ENCODE measurements at regions of chr3 and their contacts with region 1.

Region 1: DNA sequence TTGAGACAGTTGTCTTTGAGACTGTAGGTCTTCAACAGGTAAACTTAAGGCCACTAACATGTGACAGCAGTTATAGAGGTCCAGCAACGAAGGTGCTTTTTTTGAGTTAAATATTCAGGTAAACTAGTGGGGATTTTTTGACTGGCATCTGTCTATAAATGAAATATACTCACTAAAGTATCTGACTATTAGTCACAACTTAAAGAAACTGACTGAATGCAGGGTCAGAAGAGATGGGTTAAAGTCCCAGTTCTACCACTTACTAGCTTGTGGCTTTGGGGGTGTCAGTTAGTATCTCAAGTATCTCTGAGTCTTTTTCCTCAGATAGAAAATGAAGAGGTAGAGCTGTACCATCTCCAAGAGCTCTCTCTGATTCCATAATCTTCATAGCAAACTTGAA is 18.0 kb downstream of the MIX23 start:
- DNase-seq: no peak
- H3K4me3 Mint-ChIP-seq: peak overlapping the region; percentile 14
- H3K27ac Mint-ChIP-seq: peak overlapping the region; percentile 92
- H3K4me1 Mint-ChIP-seq: peaks cover 41% of the 10 kb centered on the region
- H3K27me3 Mint-ChIP-seq: no peaks in the 10 kb centered on the region

Region 2: DNA sequence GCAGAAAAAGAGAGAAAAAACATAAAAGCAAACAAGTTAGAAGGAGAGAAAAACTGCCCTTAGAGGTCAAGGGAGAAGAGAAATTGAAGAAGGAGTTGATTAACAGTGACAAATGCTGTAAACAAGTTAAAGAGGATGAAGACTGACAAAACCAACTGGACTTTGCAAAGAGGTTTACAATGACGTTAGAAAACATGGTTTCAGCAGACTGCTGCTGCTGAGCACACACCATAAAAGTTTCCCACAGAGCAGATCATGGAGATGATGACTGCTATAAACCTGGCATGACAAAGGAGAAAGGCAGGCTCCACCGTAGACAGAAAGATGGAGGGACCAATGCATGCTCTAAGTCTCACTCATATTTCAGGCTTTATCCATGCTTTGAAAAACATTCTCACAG is 898.0 kb before region 1 on chr3:
- intact Hi-C with region 1: no loop called
- DNase-seq: no peak
- H3K4me3 Mint-ChIP-seq: no peak overlapping the region
- H3K27ac Mint-ChIP-seq: no peak overlapping the region
- H3K4me1 Mint-ChIP-seq: no peaks in the 10 kb centered on the region
- H3K27me3 Mint-ChIP-seq: no peaks in the 10 kb centered on the region

Region 3: DNA sequence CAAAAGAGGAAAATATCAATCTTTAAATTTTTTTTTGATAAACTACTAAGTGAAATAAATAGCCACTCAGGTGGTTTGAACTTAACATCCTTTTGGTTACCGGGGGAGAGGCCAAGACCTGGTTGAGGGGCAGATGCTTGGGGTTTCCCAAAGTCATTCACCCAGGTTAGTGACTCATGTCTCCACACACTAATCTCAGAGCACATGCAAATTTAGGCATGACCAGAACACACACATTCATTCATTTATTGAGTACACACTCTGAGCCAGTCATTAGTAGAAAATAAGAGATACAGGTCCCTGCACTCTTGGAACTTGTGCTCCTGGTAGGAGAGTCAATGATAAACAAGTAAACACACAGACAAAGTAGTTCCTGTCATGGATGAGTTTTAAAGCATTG is 350.3 kb before region 1 on chr3:
- intact Hi-C with region 1: loop called (anchors 10 kb)
- DNase-seq: no peak
- H3K4me3 Mint-ChIP-seq: no peak overlapping the region
- H3K27ac Mint-ChIP-seq: no peak overlapping the region
- H3K4me1 Mint-ChIP-seq: peaks cover 37% of the 10 kb centered on the region
- H3K27me3 Mint-ChIP-seq: peaks cover 2% of the 10 kb centered on the region

Region 4: DNA sequence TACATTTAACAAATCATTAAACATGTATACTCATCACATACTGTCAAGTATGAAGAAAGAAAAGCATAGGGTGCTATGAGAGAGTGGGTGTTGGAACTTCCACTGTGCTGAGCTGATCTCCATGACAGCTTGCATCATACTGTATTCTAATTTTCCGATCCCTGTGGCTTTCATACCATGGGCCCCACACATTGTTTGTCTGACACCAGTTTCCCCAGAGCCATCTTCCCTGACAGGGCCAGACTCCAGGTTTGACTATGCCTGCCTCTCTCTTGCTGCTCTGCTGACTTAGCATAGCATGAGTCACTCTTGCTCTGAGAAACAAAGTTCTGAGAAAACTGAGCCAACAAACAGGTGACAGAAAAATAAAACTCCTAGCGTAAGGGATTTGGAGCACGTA is 218.6 kb before region 1 on chr3:
- intact Hi-C with region 1: loop called (anchors 1 kb)
- DNase-seq: peak; percentile 56
- H3K4me3 Mint-ChIP-seq: no peak overlapping the region
- H3K27ac Mint-ChIP-seq: peak overlapping the region; percentile 46
- H3K4me1 Mint-ChIP-seq: peaks cover 31% of the 10 kb centered on the region
- H3K27me3 Mint-ChIP-seq: no peaks in the 10 kb centered on the region

Region 5: GRCh38 chr3:122322095-122323075 is 42.7 kb before region 1 on chr3:
- intact Hi-C with region 1: loop called (anchors 1 kb)
- DNase-seq: peak; percentile 40
- H3K4me3 Mint-ChIP-seq: no peak overlapping the region
- H3K27ac Mint-ChIP-seq: peak overlapping the region; percentile 47
- H3K4me1 Mint-ChIP-seq: peaks cover 32% of the 10 kb centered on the region
- H3K27me3 Mint-ChIP-seq: peaks cover 20% of the 10 kb centered on the region

Region 6: GRCh38 chr3:122415720-122416654 is 50.9 kb after region 1 on chr3 and contains the start of gene WDR5B:
- intact Hi-C with region 1: loop called (anchors 1 kb)
- DNase-seq: peak; percentile 97
- H3K4me3 Mint-ChIP-seq: peak within 1 kb of the TSS; percentile 93
- H3K27ac Mint-ChIP-seq: peak within 1 kb of the TSS; percentile 95
- H3K4me1 Mint-ChIP-seq: peaks cover 22% of the 10 kb centered on the region
- H3K27me3 Mint-ChIP-seq: no peaks in the 10 kb centered on the region
- total RNA-seq, gene WDR5B: 4.9 and 5.5 TPM in 2 replicates